ENCODE measurements at regions of chr1 and their contacts with region 1.

Region 1: DNA sequence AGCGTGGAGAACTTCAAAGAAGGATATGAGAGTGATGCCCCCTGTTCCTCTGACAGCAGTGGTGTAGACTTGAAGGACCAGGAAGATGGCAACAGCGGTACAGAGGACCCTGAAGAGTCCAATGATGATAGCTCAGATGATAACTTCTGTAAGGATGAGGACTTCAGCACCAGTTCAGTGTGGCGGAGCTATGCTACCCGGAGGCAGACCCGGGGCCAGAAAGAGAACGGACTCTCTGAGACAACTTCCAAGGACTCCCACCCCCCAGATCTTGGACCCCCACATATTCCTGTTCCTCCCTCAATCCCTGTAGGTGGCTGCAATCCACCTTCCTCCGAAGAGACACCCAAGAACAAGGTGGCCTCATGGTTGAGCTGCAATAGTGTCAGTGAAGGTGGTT is 14.0 kb downstream of the CERS2 start:
- DNase-seq: no peak
- ATAC-seq: no peak
- H3K4me3 ChIP-seq: no peak overlapping the region
- H3K27ac ChIP-seq: no peak overlapping the region
- H3K4me1 ChIP-seq: no peaks in the 10 kb centered on the region
- CTCF ChIP-seq: no peak
- EP300 ChIP-seq: no peak
- POLR2A ChIP-seq: no peak
- RAD21 ChIP-seq: no peak

Region 2: GRCh38 chr1:150970808-150971592 is 10.4 kb after region 1 on chr1:
- CTCF ChIA-PET with region 1: interaction called, 12 read pairs
- POLR2A ChIA-PET with region 1: interaction called, 3 read pairs
- DNase-seq: no peak
- ATAC-seq: peak in 1 of 2 experiments; percentile 17; a peak in 3 of 6 replicates
- H3K4me3 ChIP-seq: peak overlapping the region; percentile 90
- H3K27ac ChIP-seq: peak overlapping the region; percentile 98 to 100
- H3K4me1 ChIP-seq: peaks cover 49% of the 10 kb centered on the region
- CTCF ChIP-seq: no peak
- EP300 ChIP-seq: no peak
- POLR2A ChIP-seq: no peak
- RAD21 ChIP-seq: no peak

Region 3: DNA sequence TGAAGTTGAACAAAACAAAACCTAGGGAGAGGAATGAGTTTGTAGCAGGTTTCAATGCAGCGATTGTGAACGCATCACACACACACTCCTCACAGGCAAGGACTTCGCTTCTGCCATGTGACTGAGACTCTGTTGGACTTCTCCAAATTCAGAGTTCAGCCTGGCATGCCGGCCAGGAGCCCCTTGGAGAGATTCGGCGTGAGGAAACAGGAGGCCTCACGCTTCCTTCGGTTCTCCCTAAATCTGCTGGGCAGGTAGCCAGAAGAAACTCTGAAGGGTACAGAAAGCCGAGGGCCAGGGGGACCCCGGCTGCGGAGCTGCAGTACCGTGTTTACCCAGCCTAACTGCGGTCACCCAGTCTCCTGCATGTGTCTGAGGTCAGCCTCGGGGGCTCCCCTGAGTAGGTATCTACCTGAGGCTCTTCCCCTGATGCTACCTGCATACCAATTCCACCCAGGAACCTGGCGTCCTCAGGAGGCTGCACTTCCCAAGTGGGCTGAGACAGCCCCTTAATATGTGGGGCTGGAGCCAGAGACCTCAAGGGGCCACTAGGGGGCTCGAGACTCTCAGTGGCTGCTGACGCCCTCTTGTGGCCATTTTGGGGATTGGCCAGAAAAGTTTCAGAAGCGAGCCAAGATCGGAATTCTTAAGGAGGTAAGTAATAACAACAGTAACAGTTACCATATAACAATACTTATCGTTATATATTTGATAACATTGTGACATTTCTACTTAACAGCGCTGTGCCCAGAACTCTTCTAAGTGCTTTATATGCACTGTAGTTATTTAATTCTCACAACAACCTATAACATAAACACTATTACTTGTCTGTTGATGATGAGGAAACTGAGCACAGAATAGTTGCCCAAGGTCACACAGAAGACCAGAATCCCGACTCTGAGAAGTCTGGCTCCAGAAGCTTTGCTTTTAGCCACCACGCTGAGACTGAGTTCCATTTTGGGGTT is 18.7 kb after region 1 on chr1:
- CTCF ChIA-PET with region 1: interaction called, 44 read pairs
- POLR2A ChIA-PET with region 1: interaction called, 3 read pairs
- DNase-seq: peak; percentile 89 to 93
- ATAC-seq: peak; percentile 47 to 73
- H3K4me3 ChIP-seq: no peak overlapping the region
- H3K27ac ChIP-seq: peak overlapping the region; percentile 68 to 100
- H3K4me1 ChIP-seq: peaks cover 61% of the 10 kb centered on the region
- CTCF ChIP-seq: peak; percentile 100
- EP300 ChIP-seq: no peak
- POLR2A ChIP-seq: no peak
- RAD21 ChIP-seq: peak; percentile 87 to 89